ENCODE measurements at regions of chr6 and their contacts with region 1.

Region 1: DNA sequence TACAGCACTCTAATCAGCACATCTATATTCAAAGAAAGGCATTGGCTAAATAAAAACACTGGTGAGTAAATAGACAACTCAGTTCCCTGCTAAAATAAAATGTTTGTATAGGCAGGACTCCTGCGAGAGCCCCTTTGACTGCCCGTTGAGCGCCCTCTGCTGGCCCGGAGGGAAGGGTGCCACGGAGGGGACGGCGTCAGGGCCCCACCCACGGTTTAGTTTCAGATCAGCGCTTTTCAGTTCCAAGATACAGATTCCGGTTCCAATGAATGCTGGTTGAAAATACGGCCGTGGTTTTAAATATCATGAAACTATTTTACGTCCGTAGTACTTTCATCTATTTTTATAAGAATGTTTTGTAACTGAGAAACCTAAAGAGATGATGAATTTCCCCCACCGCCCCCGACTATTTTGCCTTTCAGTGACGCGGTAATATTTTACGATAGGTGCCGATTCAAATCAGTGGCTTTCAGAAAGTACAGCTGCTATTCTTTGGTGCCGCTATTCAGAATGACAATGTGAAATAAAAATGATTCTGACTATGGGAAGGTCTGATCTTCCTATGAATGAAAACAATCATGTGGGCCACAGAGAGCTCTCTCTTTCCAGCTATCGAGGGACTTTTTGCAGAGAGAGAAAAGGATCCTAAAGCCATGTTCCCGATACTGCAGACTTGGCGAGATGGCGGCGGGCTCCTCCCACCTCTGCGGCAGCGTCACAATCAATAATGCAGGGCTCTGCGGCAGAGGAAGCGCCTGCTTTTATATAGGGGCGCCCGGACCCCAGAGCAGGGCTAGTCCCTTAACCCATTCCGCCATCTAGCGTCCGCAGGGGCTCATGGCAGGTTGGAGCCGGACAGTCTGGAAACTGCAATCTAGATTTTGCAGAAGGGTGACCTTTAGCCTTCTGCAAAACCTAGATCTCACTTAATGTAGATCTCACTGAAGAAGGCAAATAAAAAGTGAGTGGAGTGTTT is 10.6 kb upstream of the CCN6 start:
- DNase-seq: peak; percentile 45
- ATAC-seq: peak; percentile 97
- H3K4me3 ChIP-seq: peak overlapping the region; percentile 94
- H3K27ac ChIP-seq: peak overlapping the region; percentile 51
- H3K4me1 ChIP-seq: no peaks in the 10 kb centered on the region
- H3K27me3 ChIP-seq: no peaks in the 10 kb centered on the region
- CTCF ChIP-seq: peak; percentile 97 to 98 (median 97)
- EP300 ChIP-seq: peak in 1 of 2 experiments; percentile 50; a peak in 1 of 4 replicates
- POLR2A ChIP-seq: 0 out of 2 replicates have a peak, but pooled peaks have one; percentile 32
- RAD21 ChIP-seq: peak; percentile 98

Region 2: GRCh38 chr6:111250791-111251354 is 792.4 kb before region 1 on chr6:
- CTCF ChIA-PET with region 1: interaction called, 3 read pairs
- POLR2A ChIA-PET with region 1: no interaction called
- RAD21 ChIA-PET with region 1: no interaction called
- SMC1A ChIA-PET with region 1: no interaction called
- in situ Hi-C with region 1: loop called (anchors 5 kb)
- intact Hi-C with region 1: no loop called
- DNase-seq: no peak
- ATAC-seq: peak; percentile 84
- H3K4me3 ChIP-seq: no peak overlapping the region
- H3K27ac ChIP-seq: no peak overlapping the region
- H3K4me1 ChIP-seq: no peaks in the 10 kb centered on the region
- H3K27me3 ChIP-seq: no peaks in the 10 kb centered on the region
- CTCF ChIP-seq: no peak
- EP300 ChIP-seq: no peak
- POLR2A ChIP-seq: no peak
- RAD21 ChIP-seq: no peak

Region 3: GRCh38 chr6:111483736-111484632 is 559.3 kb before region 1 on chr6:
- CTCF ChIA-PET with region 1: interaction called, 9 read pairs
- POLR2A ChIA-PET with region 1: no interaction called
- RAD21 ChIA-PET with region 1: interaction called, 16 read pairs
- SMC1A ChIA-PET with region 1: no interaction called
- in situ Hi-C with region 1: no loop called
- intact Hi-C with region 1: loop called (anchors 1 kb)
- DNase-seq: peak; percentile 69
- ATAC-seq: peak; percentile 69
- H3K4me3 ChIP-seq: peak overlapping the region; percentile 88
- H3K27ac ChIP-seq: peak overlapping the region; percentile 98
- H3K4me1 ChIP-seq: peaks cover 17% of the 10 kb centered on the region
- H3K27me3 ChIP-seq: no peaks in the 10 kb centered on the region
- CTCF ChIP-seq: no peak
- EP300 ChIP-seq: peak; percentile 16 to 34; a peak in 1 of 4 replicates
- POLR2A ChIP-seq: peak; percentile 92
- RAD21 ChIP-seq: no peak

Region 4: DNA sequence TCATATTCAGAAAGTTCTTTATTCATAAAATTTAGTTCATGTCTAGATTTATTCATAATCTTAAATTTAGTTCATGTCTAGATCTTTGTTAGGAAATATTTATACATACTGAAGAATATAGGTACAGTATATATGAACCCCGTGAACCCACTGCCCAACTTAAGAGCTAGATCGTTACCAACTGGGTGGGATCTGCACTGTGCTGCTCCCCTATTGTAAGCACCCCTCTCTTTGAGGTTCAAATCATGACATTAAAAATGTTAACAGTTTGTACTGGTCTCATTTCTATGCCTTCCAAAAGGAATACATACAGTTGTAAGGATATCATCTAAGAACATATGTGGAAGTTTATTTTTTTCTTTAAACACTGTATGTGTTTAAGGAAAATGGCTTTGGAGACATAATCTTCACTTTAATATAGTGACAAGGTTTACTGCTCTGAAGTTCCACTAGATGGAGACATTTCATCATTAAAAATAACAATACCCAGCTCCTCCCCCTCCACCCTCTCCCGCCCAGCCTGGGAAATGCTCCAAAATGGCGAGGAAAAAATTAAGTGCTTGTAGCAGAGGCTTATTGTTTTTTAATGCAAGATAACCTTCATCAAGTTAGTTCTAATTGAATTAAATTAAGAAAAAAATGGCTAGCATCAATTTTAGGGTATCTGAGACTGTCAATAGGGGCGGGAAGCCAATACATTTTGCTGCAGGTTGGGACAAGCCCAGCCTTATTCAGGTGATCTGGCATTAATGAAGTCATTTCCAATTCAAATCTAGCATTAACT is 333.5 kb before region 1 on chr6:
- CTCF ChIA-PET with region 1: interaction called, 96 read pairs
- POLR2A ChIA-PET with region 1: interaction called, 4 read pairs
- RAD21 ChIA-PET with region 1: interaction called, 40 read pairs
- SMC1A ChIA-PET with region 1: interaction called, 54 read pairs
- in situ Hi-C with region 1: no loop called
- intact Hi-C with region 1: loop called (anchors 1 kb)
- DNase-seq: peak; percentile 33
- ATAC-seq: peak; percentile 97
- H3K4me3 ChIP-seq: no peak overlapping the region
- H3K27ac ChIP-seq: peak overlapping the region; percentile 13; the same call in 1 of the 2 replicates
- H3K4me1 ChIP-seq: peaks cover 5% of the 10 kb centered on the region; the same call in 1 of the 2 replicates
- H3K27me3 ChIP-seq: no peaks in the 10 kb centered on the region
- CTCF ChIP-seq: peak; percentile 45 to 76 (median 62); a peak in 4 of 6 replicates
- EP300 ChIP-seq: no peak
- POLR2A ChIP-seq: no peak
- RAD21 ChIP-seq: peak; percentile 91

Region 5: GRCh38 chr6:111873178-111874024 is 169.9 kb before region 1 on chr6 and contains the start of gene FYN:
- CTCF ChIA-PET with region 1: interaction called, 4 read pairs
- POLR2A ChIA-PET with region 1: no interaction called
- RAD21 ChIA-PET with region 1: no interaction called
- SMC1A ChIA-PET with region 1: interaction called, 3 read pairs
- in situ Hi-C with region 1: no loop called
- intact Hi-C with region 1: loop called (anchors 1 kb)
- DNase-seq: peak; percentile 76
- ATAC-seq: peak; percentile 92
- H3K4me3 ChIP-seq: peak within 1 kb of the TSS; percentile 98
- H3K27ac ChIP-seq: peak within 1 kb of the TSS; percentile 76
- H3K4me1 ChIP-seq: peaks cover 5% of the 10 kb centered on the region
- H3K27me3 ChIP-seq: no peaks in the 10 kb centered on the region
- CTCF ChIP-seq: peak; percentile 28 to 65 (median 30); a peak in 5 of 6 replicates
- EP300 ChIP-seq: no peak
- POLR2A ChIP-seq: peak; percentile 95
- RAD21 ChIP-seq: peak; percentile 48
- polyA plus RNA-seq, gene FYN: 51.4 to 55.1 TPM

Region 6: DNA sequence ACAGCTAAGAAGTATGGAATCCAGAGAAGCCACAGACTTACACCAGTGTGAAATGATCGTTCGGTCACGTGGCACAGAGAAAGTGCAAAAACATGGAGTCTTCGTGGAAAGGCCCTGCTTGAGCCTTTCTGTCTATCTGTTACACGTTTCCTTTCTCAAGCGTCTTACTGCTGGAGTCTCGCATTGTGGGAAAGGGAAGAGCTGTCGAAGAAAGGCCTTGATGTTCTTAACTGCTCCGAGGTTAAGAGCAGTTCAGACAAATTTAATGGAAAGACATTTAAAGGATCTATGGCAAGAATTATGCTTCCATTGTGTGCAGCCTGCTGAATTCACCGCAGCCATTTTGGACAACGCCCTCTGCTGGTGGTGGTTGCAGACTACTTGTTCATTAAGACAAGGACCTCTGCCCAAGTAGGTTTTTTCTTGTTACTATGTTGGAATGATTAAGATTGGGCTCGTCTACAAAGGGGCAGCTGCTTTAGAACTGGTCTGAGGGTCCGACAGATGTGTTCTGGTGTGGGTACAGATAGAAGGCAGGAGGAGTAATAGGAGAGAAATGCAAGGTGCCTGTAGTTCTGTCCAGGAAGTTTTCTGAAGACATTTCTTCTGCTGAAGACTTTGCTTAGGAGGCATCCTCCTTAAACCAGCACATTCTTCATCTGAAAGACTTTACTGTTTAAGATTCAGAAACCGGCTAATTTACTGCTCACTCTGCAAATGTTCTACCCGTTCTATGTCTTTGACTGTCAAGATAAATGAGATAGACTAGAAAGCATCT is 14.1 kb before region 1 on chr6:
- CTCF ChIA-PET with region 1: interaction called, 60 read pairs
- POLR2A ChIA-PET with region 1: no interaction called
- RAD21 ChIA-PET with region 1: interaction called, 3 read pairs
- SMC1A ChIA-PET with region 1: interaction called, 11 read pairs
- in situ Hi-C with region 1: no loop called
- intact Hi-C with region 1: no loop called
- DNase-seq: no peak
- ATAC-seq: peak; percentile 87
- H3K4me3 ChIP-seq: no peak overlapping the region
- H3K27ac ChIP-seq: no peak overlapping the region
- H3K4me1 ChIP-seq: peaks cover 8% of the 10 kb centered on the region; the same call in 1 of the 2 replicates
- H3K27me3 ChIP-seq: no peaks in the 10 kb centered on the region
- CTCF ChIP-seq: peak; percentile 58 to 81 (median 79)
- EP300 ChIP-seq: no peak
- POLR2A ChIP-seq: no peak
- RAD21 ChIP-seq: peak; percentile 66

Measured in GM12878 (cell line).